Right ventricle myocardium inferior (tissue), 1 donor: ENCODE measurements at regions of chr9 and their contacts with region 1.

Region 1: GRCh38 chr9:70418822-70419545 is 4.5 kb upstream of the KLF9 start:
- DNase-seq: peak; percentile 99
- ATAC-seq: peak; percentile 69

Region 2: GRCh38 chr9:70438341-70438928 is 19.5 kb after region 1 on chr9:
- intact Hi-C with region 1: loop called (anchors 2 kb)
- DNase-seq: no peak
- ATAC-seq: peak; percentile 85

Region 3: GRCh38 chr9:70470050-70471015 is 51.3 kb after region 1 on chr9:
- intact Hi-C with region 1: loop called (anchors 1 kb)
- DNase-seq: no peak
- ATAC-seq: peak; percentile 91

Region 4: GRCh38 chr9:70484210-70485130 is 65.5 kb after region 1 on chr9:
- intact Hi-C with region 1: loop called (anchors 1 kb)
- DNase-seq: no peak
- ATAC-seq: peak; percentile 67

Region 5: DNA sequence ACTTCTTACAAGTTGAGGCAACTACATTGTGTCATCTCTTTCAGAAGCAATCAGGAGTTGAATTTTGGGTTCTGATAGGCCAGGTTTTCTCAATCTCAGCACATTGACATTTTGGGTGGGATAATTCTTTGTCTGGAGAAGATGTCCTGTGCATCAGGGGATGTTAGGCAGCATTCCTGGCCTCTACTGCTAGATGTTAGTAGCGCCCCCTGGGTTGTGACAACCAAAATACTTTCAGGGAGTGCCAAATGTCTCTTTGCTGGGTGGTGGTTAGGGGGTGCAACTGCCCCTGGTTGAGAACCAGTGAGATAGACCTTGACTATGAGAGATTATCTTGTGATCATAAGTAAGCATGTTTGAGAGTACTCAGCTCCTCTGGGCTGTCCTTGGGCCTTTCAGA is 159.7 kb after region 1 on chr9:
- intact Hi-C with region 1: loop called (anchors 5 kb)
- DNase-seq: no peak
- ATAC-seq: no peak